Endothelial cell of umbilical vein (primary cell): ENCODE measurements at regions of chr3 and their contacts with region 1.

Region 1: DNA sequence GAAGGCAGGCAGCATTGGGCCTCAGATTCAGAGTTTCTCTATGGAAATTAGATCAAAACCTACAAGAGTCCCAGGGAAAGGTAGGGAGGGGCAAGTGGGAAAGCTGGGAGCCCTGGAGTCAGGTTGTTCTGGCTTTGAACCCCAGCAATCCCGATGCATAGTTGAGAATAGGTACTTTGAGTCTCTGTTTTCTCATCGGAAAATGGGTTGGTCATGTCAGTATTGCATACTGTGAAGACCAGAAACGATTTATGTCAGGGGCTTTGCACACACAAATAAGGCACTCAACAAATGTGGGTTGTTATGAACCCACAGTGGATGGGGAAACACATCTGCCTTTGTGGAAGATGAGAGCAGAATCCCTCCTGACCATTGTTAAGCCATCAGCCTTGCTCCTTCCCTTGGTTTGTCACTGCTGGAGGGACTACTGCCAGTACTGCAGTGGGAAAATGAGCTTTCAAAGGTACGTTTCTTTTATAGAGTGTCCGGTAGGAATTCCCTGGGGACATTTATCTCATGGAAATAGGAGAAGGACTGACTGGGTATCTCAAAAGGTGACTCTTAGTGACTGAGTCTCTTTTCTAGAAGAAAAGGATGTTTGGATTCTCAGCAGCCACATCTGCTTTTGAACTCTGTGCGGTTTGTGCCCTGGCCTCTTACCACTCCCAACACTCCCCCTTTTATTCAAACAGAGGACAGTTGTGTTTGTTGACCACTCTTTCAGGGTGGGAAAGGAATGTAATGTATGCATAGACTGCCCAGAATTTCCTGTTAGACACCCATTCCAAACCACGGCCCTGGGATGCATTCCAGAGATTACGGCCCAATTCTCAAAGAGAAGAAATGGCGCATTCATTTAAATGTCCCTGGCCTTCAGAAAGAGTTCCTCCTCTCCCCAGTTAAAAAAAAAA is 54.6 kb upstream of the VILL start:
- DNase-seq: peak; percentile 81
- H3K4me3 ChIP-seq: no peak overlapping the region
- H3K27ac ChIP-seq: peak overlapping the region; percentile 81
- H3K4me1 ChIP-seq: peaks cover 26% of the 10 kb centered on the region
- H3K27me3 ChIP-seq: no peaks in the 10 kb centered on the region
- CTCF ChIP-seq: no peak
- POLR2A ChIP-seq: no peak

Region 2: GRCh38 chr3:37892927-37893600 is 42.9 kb before region 1 on chr3:
- CTCF ChIA-PET with region 1: interaction called, 3 read pairs
- POLR2A ChIA-PET with region 1: no interaction called
- dilution Hi-C with region 1: no loop called
- intact Hi-C with region 1: loop called (anchors 5 kb)
- DNase-seq: peak; percentile 65
- H3K4me3 ChIP-seq: no peak overlapping the region
- H3K27ac ChIP-seq: no peak overlapping the region
- H3K4me1 ChIP-seq: peaks cover 16% of the 10 kb centered on the region
- H3K27me3 ChIP-seq: no peaks in the 10 kb centered on the region
- CTCF ChIP-seq: no peak
- POLR2A ChIP-seq: no peak

Region 3: DNA sequence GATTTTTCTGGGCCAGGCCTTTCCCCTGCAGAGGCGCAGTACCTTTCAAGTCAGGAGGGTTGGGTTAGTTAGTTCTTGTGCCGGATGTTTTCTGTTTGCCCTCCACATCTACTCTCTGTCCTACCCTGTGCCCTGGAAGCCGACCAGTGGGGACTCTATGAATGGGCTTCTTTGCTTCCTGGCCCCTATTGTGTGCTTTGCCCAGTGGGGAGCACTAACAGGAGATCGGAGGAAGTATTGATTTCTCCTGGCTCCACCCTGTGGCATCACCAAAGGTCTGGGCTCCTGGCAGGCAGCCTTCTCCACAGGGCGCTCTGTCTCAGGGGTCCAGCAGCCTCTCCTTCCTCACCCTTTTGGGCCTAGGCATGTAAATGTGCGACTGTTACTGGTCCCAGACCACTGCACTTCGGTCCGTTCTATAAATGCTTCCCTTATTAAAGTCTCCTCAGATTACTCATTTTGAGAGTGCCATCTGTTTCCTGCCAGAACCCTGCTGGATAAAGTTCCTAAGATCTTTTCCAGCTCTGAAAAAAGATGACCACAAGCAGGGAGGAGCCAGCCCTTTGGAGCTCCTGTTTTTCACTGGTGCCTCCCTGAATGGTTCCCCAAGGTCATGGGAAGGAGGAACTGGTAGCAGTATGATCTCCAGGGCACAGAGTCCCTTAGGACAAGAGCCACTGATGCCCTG is 29.9 kb before region 1 on chr3:
- CTCF ChIA-PET with region 1: interaction called, 3 read pairs
- POLR2A ChIA-PET with region 1: no interaction called
- dilution Hi-C with region 1: no loop called
- intact Hi-C with region 1: loop called (anchors 1 kb)
- DNase-seq: peak; percentile 87
- H3K4me3 ChIP-seq: no peak overlapping the region
- H3K27ac ChIP-seq: peak overlapping the region; percentile 72
- H3K4me1 ChIP-seq: peaks cover 39% of the 10 kb centered on the region
- H3K27me3 ChIP-seq: no peaks in the 10 kb centered on the region
- CTCF ChIP-seq: no peak
- POLR2A ChIP-seq: no peak

Region 4: GRCh38 chr3:37956723-37957528 is 20.9 kb after region 1 on chr3:
- CTCF ChIA-PET with region 1: interaction called, 4 read pairs
- POLR2A ChIA-PET with region 1: no interaction called
- dilution Hi-C with region 1: no loop called
- intact Hi-C with region 1: loop called (anchors 2 kb)
- DNase-seq: peak; percentile 84
- H3K4me3 ChIP-seq: no peak overlapping the region
- H3K27ac ChIP-seq: peak overlapping the region; percentile 41
- H3K4me1 ChIP-seq: peaks cover 40% of the 10 kb centered on the region
- H3K27me3 ChIP-seq: no peaks in the 10 kb centered on the region
- CTCF ChIP-seq: no peak
- POLR2A ChIP-seq: no peak